ENCODE measurements at regions of chr15 and their contacts with region 1.

Region 1: DNA sequence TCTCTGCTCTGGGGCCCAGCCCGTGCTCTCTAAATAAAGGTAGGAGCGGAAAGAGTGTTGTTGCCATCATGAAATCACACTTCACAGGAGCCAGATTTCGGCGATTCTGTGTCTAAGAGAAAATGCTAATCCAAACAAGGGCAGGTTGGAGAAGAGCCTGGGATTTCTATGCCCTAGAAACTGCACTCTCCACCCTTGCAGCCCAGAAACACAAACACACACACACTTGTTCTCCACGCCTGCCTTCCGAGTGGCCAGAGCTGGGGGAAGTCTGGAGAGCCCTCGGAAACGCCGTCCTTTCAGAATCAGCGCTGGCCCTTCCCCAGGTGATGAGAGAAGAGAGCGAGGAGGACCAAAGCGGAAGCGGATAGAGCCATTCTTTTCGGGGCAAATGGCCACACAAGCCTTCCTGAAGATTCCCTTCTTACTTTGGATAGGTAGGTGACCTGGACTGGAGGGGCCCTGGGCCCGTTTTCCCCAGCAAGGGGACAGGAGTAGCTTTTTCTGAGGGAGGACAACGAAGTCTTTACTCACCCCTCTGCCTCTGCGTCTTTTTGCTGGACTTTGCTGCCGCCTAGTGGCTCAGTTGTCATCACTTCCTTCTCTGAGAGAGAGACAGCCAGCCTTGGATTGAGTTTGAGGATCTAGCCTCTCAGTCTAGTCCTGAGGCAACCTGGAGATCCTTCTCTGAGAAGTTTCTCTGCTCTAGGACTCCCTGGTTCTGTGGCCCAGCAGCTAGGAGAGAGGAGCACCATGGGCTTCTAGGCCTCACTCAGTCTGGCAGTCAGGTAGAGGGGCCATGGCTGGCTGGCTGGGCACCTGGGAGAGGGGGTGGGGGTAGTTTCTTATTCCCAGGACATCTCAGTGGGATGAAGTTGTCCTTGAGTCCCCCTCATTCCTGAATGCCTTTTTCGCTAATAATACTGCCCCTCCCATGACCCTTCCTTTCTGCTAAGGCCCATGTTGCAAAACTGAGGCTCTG is 37.7 kb downstream of the SENP8 start:
- DNase-seq: peak; percentile 81 to 87 (median 85)
- ATAC-seq: peak; percentile 88 to 96 (median 92)
- H3K4me3 ChIP-seq: peak overlapping the region; percentile 4 to 73 (median 59)
- H3K27ac ChIP-seq: peak overlapping the region in 8 of 12 donors; percentile 35 to 72 (median 44)
- H3K4me1 ChIP-seq: peaks cover 0 to 16% (median 2%) of the 10 kb centered on the region in 12 donors
- H3K27me3 ChIP-seq: no peaks in the 10 kb centered on the region
- CTCF ChIP-seq: peak; percentile 68 to 90 (median 82)
- POLR2A ChIP-seq: no peak

Region 2: GRCh38 chr15:71743861-71744382 is 412.0 kb before region 1 on chr15:
- intact Hi-C with region 1: loop called in 7 of 10 experiments (anchors 2 to 10 kb)
- DNase-seq: peak in 4 of 5 donors; percentile 35 to 63 (median 46)
- ATAC-seq: peak in 3 of 4 donors; percentile 25 to 44 (median 38)
- H3K4me3 ChIP-seq: no peak overlapping the region
- H3K27ac ChIP-seq: no peak overlapping the region
- H3K4me1 ChIP-seq: peaks cover 0 to 6% (median 0%) of the 10 kb centered on the region in 12 donors
- H3K27me3 ChIP-seq: no peaks in the 10 kb centered on the region
- CTCF ChIP-seq: peak; percentile 69 to 86 (median 80)
- POLR2A ChIP-seq: no peak

Region 3: GRCh38 chr15:71780115-71780976 is 375.6 kb before region 1 on chr15:
- intact Hi-C with region 1: loop called in 2 of 10 experiments (anchors 10 kb)
- DNase-seq: no peak
- ATAC-seq: peak in 3 of 4 donors; percentile 19 to 34 (median 25)
- H3K4me3 ChIP-seq: peak overlapping the region in 1 of 12 donors; percentile 18
- H3K27ac ChIP-seq: peak overlapping the region in 4 of 12 donors; percentile 6 to 55 (median 24)
- H3K4me1 ChIP-seq: peaks cover 0 to 37% (median 2%) of the 10 kb centered on the region in 12 donors
- H3K27me3 ChIP-seq: no peaks in the 10 kb centered on the region
- CTCF ChIP-seq: peak; percentile 48 to 76 (median 63)
- POLR2A ChIP-seq: no peak

Region 4: DNA sequence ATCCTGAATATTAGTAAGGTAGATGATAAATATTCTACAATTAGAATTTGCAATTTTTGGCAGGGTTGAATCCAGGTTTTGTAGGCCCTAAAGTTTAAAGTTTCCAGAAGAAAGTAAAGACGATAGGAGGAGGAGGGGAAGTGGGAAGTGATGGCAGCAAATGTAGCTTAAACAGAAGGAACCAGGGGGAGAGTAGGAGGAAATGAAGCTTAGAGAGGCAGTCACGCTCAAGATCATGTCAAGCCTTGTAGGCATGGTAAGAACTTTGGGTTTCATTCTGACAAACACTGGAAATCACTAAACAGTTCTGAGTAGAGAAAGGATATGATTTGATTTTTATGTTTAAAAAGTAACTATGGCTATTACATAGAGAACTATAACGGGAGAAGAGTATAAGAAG is 281.7 kb before region 1 on chr15:
- intact Hi-C with region 1: loop called in 1 of 10 experiments (anchors 10 kb)
- DNase-seq: no peak
- ATAC-seq: no peak
- H3K4me3 ChIP-seq: no peak overlapping the region
- H3K27ac ChIP-seq: no peak overlapping the region
- H3K4me1 ChIP-seq: no peaks in the 10 kb centered on the region
- H3K27me3 ChIP-seq: no peaks in the 10 kb centered on the region
- CTCF ChIP-seq: no peak
- POLR2A ChIP-seq: no peak

Region 5: GRCh38 chr15:71957026-71957425 is 198.9 kb before region 1 on chr15:
- intact Hi-C with region 1: loop called in 1 of 10 experiments (anchors 5 kb)
- DNase-seq: no peak
- ATAC-seq: no peak
- H3K4me3 ChIP-seq: no peak overlapping the region
- H3K27ac ChIP-seq: no peak overlapping the region
- H3K4me1 ChIP-seq: peaks cover 0 to 6% (median 0%) of the 10 kb centered on the region in 12 donors
- H3K27me3 ChIP-seq: no peaks in the 10 kb centered on the region
- CTCF ChIP-seq: no peak
- POLR2A ChIP-seq: no peak

Region 6: DNA sequence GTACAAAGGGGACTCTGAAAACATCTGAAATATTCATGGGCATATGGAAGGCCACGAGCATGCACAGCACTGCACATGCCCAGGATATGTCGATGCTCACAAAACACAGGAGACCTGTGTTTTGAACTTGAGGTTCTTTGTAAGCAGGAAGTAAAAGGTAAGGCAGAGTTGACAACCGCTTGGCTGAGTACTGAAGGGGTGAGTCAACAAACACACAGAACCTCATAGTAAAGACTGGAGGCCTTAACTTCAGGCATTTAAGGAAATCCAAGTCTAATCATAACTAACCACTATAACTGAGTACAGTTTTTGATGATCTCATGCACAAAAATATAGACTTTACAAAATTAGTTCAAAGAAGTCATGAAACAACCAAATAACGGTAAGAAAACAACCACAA is 118.6 kb before region 1 on chr15:
- intact Hi-C with region 1: loop called in 1 of 10 experiments (anchors 10 kb)
- DNase-seq: no peak
- ATAC-seq: no peak
- H3K4me3 ChIP-seq: no peak overlapping the region
- H3K27ac ChIP-seq: no peak overlapping the region
- H3K4me1 ChIP-seq: peaks cover 0 to 16% (median 7%) of the 10 kb centered on the region in 12 donors
- H3K27me3 ChIP-seq: no peaks in the 10 kb centered on the region
- CTCF ChIP-seq: no peak
- POLR2A ChIP-seq: no peak

Region 7: GRCh38 chr15:72222259-72222832 is 66.4 kb after region 1 on chr15:
- intact Hi-C with region 1: no loop called
- DNase-seq: peak in 4 of 5 donors; percentile 45 to 83 (median 66)
- ATAC-seq: peak; percentile 72 to 89 (median 82)
- H3K4me3 ChIP-seq: no peak overlapping the region
- H3K27ac ChIP-seq: peak overlapping the region in 8 of 12 donors; percentile 32 to 65 (median 44)
- H3K4me1 ChIP-seq: peaks cover 0 to 80% (median 60%) of the 10 kb centered on the region in 12 donors
- H3K27me3 ChIP-seq: no peaks in the 10 kb centered on the region
- CTCF ChIP-seq: no peak
- POLR2A ChIP-seq: no peak